Activated T-helper 1 cell treated with anti-CD3 and anti-CD28 coated beads, Interleukin-12 subunit alpha, Interleukin-12 subunit beta, Interleukin-2, Interleukin-4 antibody, amounts not matched to agents 30 ng/mL and 10 ng/mL and 1 ng/mL, durations not matched to agents 14 hours and 24 hours and 36 hours (primary cell): ENCODE measurements at regions of chr6 and their contacts with region 1.

Region 1: GRCh38 chr6:16657768-16658167 is 103.5 kb downstream of the ATXN1 start:
- DNase-seq: no peak
- H3K4me3 Mint-ChIP-seq: peak overlapping the region; percentile 70
- H3K27ac Mint-ChIP-seq: peak overlapping the region; percentile 88
- H3K4me1 Mint-ChIP-seq: peaks cover 64% of the 10 kb centered on the region
- H3K27me3 Mint-ChIP-seq: no peaks in the 10 kb centered on the region

Region 2: DNA sequence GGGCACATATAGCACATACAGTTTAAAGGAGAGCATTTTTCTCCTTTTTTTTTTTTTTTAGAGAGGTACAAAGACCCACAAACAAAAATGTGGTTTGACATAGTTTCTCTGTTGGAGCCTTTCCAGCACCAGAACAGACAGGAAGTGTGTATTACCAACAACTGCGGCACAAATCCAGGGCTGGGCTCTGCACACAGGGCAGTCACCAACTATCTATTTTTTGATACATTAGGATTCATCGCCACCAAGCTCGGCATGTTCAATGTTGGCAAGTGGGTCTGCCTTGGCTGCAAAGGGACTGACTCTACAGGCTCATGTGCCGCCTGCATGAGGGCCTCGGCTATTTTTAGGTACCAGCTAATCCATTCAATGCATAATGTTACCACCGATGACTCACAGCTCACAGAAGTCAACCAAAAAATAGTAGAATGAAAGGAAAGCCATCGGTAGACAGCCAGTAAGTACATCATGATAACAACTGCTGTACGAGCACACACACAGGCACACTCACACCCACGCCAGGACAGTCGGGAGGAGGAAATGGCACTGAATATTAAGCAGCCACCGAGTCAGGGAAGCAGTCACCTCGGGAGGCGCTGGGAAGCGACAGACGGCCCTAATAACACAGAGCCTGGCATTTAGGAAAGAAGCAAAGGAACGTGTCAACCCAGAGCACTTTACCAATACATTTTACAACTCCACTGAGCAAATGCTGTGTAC is 337.8 kb before region 1 on chr6:
- intact Hi-C with region 1: loop called (anchors 1 kb)
- DNase-seq: peak; percentile 65
- H3K4me3 Mint-ChIP-seq: peak overlapping the region; percentile 56
- H3K27ac Mint-ChIP-seq: peak overlapping the region; percentile 81
- H3K4me1 Mint-ChIP-seq: peaks cover 76% of the 10 kb centered on the region
- H3K27me3 Mint-ChIP-seq: no peaks in the 10 kb centered on the region

Region 3: GRCh38 chr6:16473184-16473907 is 184.4 kb before region 1 on chr6:
- intact Hi-C with region 1: loop called (anchors 2 kb)
- DNase-seq: peak; percentile 14
- H3K4me3 Mint-ChIP-seq: peak overlapping the region; percentile 66
- H3K27ac Mint-ChIP-seq: peak overlapping the region; percentile 93
- H3K4me1 Mint-ChIP-seq: peaks cover 82% of the 10 kb centered on the region
- H3K27me3 Mint-ChIP-seq: no peaks in the 10 kb centered on the region

Region 4: DNA sequence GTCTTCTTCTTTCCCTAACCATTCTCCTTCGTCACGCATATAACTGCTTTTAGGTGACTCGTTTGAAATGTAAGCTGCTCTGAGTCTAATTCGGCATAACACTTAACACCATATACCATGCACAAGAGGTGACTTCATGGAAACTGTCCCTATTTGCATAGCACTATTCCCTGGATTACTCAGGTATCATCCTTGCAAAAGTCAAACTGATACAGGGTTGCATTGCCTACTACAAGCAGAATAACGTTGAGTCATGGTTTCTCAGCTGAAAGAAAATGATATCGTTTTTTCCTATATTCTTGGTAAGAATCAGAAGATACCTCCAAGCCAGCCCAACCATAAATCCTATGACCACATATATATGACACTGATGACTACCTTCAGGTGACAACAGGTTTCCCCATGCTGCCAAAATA is 124.0 kb before region 1 on chr6:
- intact Hi-C with region 1: loop called (anchors 2 kb)
- DNase-seq: no peak
- H3K4me3 Mint-ChIP-seq: no peak overlapping the region
- H3K27ac Mint-ChIP-seq: peak overlapping the region; percentile 83
- H3K4me1 Mint-ChIP-seq: peaks cover 45% of the 10 kb centered on the region
- H3K27me3 Mint-ChIP-seq: no peaks in the 10 kb centered on the region

Region 5: GRCh38 chr6:16625291-16626265 is 32.2 kb before region 1 on chr6:
- intact Hi-C with region 1: no loop called
- DNase-seq: no peak
- H3K4me3 Mint-ChIP-seq: no peak overlapping the region
- H3K27ac Mint-ChIP-seq: no peak overlapping the region
- H3K4me1 Mint-ChIP-seq: peaks cover 37% of the 10 kb centered on the region
- H3K27me3 Mint-ChIP-seq: no peaks in the 10 kb centered on the region

Region 6: GRCh38 chr6:16670183-16670582 is 12.4 kb after region 1 on chr6:
- intact Hi-C with region 1: loop called (anchors 1 kb)
- DNase-seq: no peak
- H3K4me3 Mint-ChIP-seq: peak overlapping the region; percentile 51
- H3K27ac Mint-ChIP-seq: peak overlapping the region; percentile 94
- H3K4me1 Mint-ChIP-seq: peaks cover 84% of the 10 kb centered on the region
- H3K27me3 Mint-ChIP-seq: no peaks in the 10 kb centered on the region

Region 7: GRCh38 chr6:16698997-16699868 is 41.5 kb after region 1 on chr6:
- intact Hi-C with region 1: loop called (anchors 1 kb)
- DNase-seq: no peak
- H3K4me3 Mint-ChIP-seq: peak overlapping the region; percentile 80
- H3K27ac Mint-ChIP-seq: peak overlapping the region; percentile 98
- H3K4me1 Mint-ChIP-seq: peaks cover 74% of the 10 kb centered on the region
- H3K27me3 Mint-ChIP-seq: no peaks in the 10 kb centered on the region

Region 8: GRCh38 chr6:16800942-16801341 is 143.2 kb after region 1 on chr6:
- intact Hi-C with region 1: no loop called
- DNase-seq: no peak
- H3K4me3 Mint-ChIP-seq: peak overlapping the region; percentile 21
- H3K27ac Mint-ChIP-seq: no peak overlapping the region
- H3K4me1 Mint-ChIP-seq: peaks cover 18% of the 10 kb centered on the region
- H3K27me3 Mint-ChIP-seq: peaks cover 17% of the 10 kb centered on the region

Region 9: DNA sequence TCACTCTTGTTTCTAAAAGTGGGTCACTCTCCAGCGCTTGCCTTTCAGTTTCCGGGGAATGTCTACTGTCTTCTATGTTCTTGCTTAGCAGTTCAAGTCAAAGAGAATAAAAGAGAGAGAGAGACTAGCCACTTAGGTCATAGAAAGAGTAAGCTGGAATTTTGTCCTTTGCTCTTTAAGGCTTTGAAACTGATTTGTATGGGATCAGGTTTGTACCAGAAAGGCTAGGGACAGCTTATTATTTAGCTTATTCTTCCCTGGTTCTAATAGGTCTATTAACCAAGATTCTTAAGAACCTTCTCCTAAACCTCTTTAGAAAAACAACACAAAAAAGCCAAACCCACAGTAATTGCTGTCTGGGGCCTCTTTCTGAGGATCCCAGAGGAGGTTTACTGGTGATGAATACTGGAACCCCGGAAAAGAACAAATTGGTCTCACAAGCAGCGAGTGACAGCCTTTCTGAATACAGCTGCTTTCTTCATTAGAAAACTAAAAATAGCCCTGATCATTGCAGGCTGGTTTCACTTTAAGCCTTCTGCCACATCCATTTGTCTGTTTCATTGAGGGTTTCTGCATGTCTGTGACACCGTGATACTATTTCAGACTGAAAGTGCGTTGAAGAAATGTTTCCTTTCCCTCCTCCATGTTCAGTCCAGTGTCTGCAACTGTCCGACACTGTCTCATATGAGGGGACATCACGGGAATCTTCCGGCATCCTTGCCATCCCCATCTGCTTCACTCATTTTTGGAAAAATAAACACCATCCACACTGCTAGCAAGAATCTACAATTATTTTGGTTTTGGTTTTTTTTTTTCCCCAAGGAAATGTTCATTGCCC is 178.6 kb after region 1 on chr6:
- intact Hi-C with region 1: loop called (anchors 5 kb)
- DNase-seq: no peak
- H3K4me3 Mint-ChIP-seq: peak overlapping the region; percentile 59
- H3K27ac Mint-ChIP-seq: peak overlapping the region; percentile 73
- H3K4me1 Mint-ChIP-seq: peaks cover 25% of the 10 kb centered on the region
- H3K27me3 Mint-ChIP-seq: peaks cover 8% of the 10 kb centered on the region